H1 (cell line): ENCODE measurements at regions of chr6 and their contacts with region 1.

Region 1: GRCh38 chr6:42453031-42453653 is 1.4 kb upstream of the TRERF1 start:
- DNase-seq: peak in 1 of 2 experiments; percentile 91
- H3K4me3 ChIP-seq: peak overlapping the region; percentile 73 to 96 (median 94)
- H3K27ac ChIP-seq: peak overlapping the region; percentile 89; the same call in 1 of the 2 replicates
- H3K4me1 ChIP-seq: peaks cover 0 to 26% (median 14%) of the 10 kb centered on the region in 4 experiments; a peak in 6 of 7 replicates
- H3K27me3 ChIP-seq: no peaks in the 10 kb centered on the region; a peak in 1 of 7 replicates
- CTCF ChIP-seq: no peak
- EP300 ChIP-seq: peak in 1 of 2 experiments; percentile 1; a peak in 1 of 3 replicates
- POLR2A ChIP-seq: peak in 1 of 2 experiments; percentile 30; a peak in 2 of 3 replicates
- RAD21 ChIP-seq: 0 out of 4 replicates have a peak, but pooled peaks of 1 of the 2 experiments have one; percentile 15

Region 2: GRCh38 chr6:42378125-42378524 is 75.0 kb before region 1 on chr6:
- CTCF ChIA-PET with region 1: no interaction called
- POLR2A ChIA-PET with region 1: no interaction called
- DNase-seq: no peak
- H3K4me3 ChIP-seq: no peak overlapping the region
- H3K27ac ChIP-seq: no peak overlapping the region
- H3K4me1 ChIP-seq: no peaks in the 10 kb centered on the region
- H3K27me3 ChIP-seq: no peaks in the 10 kb centered on the region
- CTCF ChIP-seq: no peak
- EP300 ChIP-seq: no peak
- POLR2A ChIP-seq: no peak
- RAD21 ChIP-seq: no peak

Region 3: GRCh38 chr6:42440778-42441696 is 12.1 kb before region 1 on chr6:
- CTCF ChIA-PET with region 1: interaction called, 16 read pairs
- POLR2A ChIA-PET with region 1: interaction called, 88 read pairs
- DNase-seq: peak in 1 of 2 experiments; percentile 37
- H3K4me3 ChIP-seq: peak overlapping the region; percentile 12 to 54 (median 32); a peak in 7 of 8 replicates
- H3K27ac ChIP-seq: peak overlapping the region; percentile 47; the same call in 1 of the 2 replicates
- H3K4me1 ChIP-seq: peaks cover 32 to 61% (median 44%) of the 10 kb centered on the region in 4 experiments
- H3K27me3 ChIP-seq: no peaks in the 10 kb centered on the region
- CTCF ChIP-seq: no peak
- EP300 ChIP-seq: no peak
- POLR2A ChIP-seq: no peak
- RAD21 ChIP-seq: no peak

Region 4: GRCh38 chr6:42539135-42539534 is 86.0 kb after region 1 on chr6:
- CTCF ChIA-PET with region 1: no interaction called
- POLR2A ChIA-PET with region 1: no interaction called
- DNase-seq: no peak
- H3K4me3 ChIP-seq: no peak overlapping the region
- H3K27ac ChIP-seq: no peak overlapping the region
- H3K4me1 ChIP-seq: no peaks in the 10 kb centered on the region
- H3K27me3 ChIP-seq: no peaks in the 10 kb centered on the region
- CTCF ChIP-seq: no peak
- EP300 ChIP-seq: no peak
- POLR2A ChIP-seq: no peak
- RAD21 ChIP-seq: no peak

Region 5: GRCh38 chr6:42563697-42564505 is 110.8 kb after region 1 on chr6 and contains the start of gene UBR2:
- CTCF ChIA-PET with region 1: interaction called, 4 read pairs
- POLR2A ChIA-PET with region 1: interaction called, 11 read pairs
- DNase-seq: peak; percentile 89
- H3K4me3 ChIP-seq: peak within 1 kb of the TSS; percentile 65 to 98 (median 90)
- H3K27ac ChIP-seq: peak within 1 kb of the TSS; percentile 88
- H3K4me1 ChIP-seq: no peaks in the 10 kb centered on the region; a peak in 3 of 7 replicates
- H3K27me3 ChIP-seq: no peaks in the 10 kb centered on the region
- CTCF ChIP-seq: peak; percentile 37 to 67 (median 54)
- EP300 ChIP-seq: peak in 1 of 2 experiments; percentile 31; a peak in 1 of 3 replicates
- POLR2A ChIP-seq: peak; percentile 85 to 88
- RAD21 ChIP-seq: 0 out of 4 replicates have a peak, but pooled peaks have one; percentile 13 to 24
- total RNA-seq, gene UBR2: 17.2 and 19.5 TPM in 2 replicates